ENCODE measurements at regions of chr6 and their contacts with region 1.

Region 1: DNA sequence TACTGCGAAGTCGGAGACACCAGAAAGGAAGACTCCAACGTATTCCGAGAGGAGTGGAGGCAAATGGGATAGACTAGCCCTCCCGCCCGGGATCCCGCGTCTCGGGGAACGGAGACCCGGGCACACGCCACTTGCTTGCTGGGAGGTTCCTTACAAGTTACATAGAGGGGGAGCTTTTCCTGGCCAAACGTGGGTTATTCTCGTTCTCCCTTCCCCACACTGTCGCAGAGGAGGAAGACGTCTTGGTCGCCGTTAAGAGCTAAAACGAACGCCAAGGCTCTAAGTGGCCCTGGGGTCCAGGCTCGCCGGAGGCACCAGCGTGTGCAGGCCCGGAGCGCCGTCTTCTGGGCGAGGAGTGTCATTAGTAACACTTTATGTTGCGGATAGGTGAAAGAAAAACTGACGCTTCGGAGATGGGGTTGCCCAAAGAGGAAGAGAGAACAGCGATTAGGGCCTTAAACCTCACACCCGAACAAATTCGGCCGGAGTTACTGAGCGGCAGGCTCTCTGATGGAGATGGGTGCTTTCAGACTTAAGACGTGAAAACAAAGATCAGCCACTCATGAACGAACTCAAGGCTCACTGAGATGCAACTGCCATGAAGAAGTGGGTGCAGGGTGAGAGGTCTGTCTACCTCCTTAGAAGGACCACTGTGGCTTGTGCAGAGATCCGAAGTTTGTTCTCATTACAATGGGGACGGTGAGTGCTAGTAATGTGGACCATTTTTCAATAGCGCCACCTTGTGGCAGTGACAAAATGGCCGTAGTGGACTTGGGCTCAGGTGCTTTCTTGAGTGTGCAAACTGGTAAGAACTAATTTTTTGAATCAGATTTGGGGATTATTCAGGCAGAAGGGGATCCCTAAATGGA is 11.7 kb upstream of the ZNF311 start:
- DNase-seq: peak; percentile 92
- H3K4me3 Mint-ChIP-seq: peak overlapping the region; percentile 90
- H3K27ac Mint-ChIP-seq: peak overlapping the region; percentile 84
- H3K4me1 Mint-ChIP-seq: peaks cover 12% of the 10 kb centered on the region
- H3K27me3 Mint-ChIP-seq: peaks cover 9% of the 10 kb centered on the region

Region 2: GRCh38 chr6:27078734-27079357 is 1937.9 kb before region 1 on chr6:
- CTCF ChIA-PET with region 1: no interaction called
- intact Hi-C with region 1: no loop called
- DNase-seq: peak; percentile 64
- H3K4me3 Mint-ChIP-seq: peak overlapping the region; percentile 67
- H3K27ac Mint-ChIP-seq: no peak overlapping the region
- H3K4me1 Mint-ChIP-seq: peaks cover 2% of the 10 kb centered on the region
- H3K27me3 Mint-ChIP-seq: peaks cover 26% of the 10 kb centered on the region

Region 3: GRCh38 chr6:28683944-28684538 is 332.8 kb before region 1 on chr6:
- CTCF ChIA-PET with region 1: interaction called, 4 read pairs
- intact Hi-C with region 1: loop called (anchors 1 kb)
- DNase-seq: no peak
- H3K4me3 Mint-ChIP-seq: no peak overlapping the region
- H3K27ac Mint-ChIP-seq: no peak overlapping the region
- H3K4me1 Mint-ChIP-seq: peaks cover 5% of the 10 kb centered on the region
- H3K27me3 Mint-ChIP-seq: peaks cover 73% of the 10 kb centered on the region

Region 4: DNA sequence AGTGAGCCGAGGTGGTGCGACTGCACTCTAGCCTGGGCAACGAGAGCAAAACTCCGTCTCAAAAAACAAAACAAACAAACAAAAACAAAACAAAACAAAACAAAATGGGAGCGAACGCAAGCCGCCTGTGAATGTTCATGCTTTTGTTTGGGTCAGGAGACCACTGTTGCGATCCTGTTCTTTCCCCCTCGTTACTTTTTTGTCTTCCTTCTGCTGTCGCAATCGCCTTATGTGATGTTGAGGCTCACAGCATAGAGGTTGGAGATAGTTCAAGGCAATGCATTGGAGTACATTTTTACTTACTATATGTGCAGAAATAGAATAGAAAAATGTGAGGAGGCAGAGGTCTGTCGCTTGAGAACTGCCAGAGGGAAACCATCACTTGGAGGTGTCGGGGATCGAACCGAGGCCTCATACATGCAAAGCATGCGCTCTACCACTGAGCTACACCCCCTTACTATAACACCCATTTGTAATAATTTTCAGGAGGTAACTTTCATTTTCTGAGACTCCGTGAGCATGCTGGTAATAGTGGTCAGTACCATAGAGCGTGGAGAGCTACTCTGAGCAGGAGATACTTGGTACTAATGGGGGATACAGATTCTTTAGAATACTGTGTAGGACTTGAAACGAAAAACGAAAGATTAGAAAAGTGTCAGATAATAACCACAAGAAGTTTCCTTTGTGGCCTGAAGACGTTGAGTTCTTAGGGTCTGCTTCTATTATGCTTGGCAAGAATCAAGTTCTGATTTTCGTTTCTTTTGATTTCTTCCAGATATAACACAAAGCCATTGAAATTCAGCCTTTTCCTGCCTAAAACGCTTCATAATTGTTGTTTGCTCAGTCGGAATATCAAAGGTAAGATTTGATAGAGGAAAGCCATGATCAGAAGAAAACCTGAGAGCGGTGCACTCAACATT is 214.1 kb before region 1 on chr6:
- CTCF ChIA-PET with region 1: no interaction called
- intact Hi-C with region 1: no loop called
- DNase-seq: no peak
- H3K4me3 Mint-ChIP-seq: no peak overlapping the region
- H3K27ac Mint-ChIP-seq: no peak overlapping the region
- H3K4me1 Mint-ChIP-seq: peaks cover 1% of the 10 kb centered on the region
- H3K27me3 Mint-ChIP-seq: peaks cover 66% of the 10 kb centered on the region

Region 5: GRCh38 chr6:28960846-28961500 is 55.8 kb before region 1 on chr6:
- CTCF ChIA-PET with region 1: no interaction called
- intact Hi-C with region 1: no loop called
- DNase-seq: no peak
- H3K4me3 Mint-ChIP-seq: no peak overlapping the region
- H3K27ac Mint-ChIP-seq: no peak overlapping the region
- H3K4me1 Mint-ChIP-seq: no peaks in the 10 kb centered on the region
- H3K27me3 Mint-ChIP-seq: peaks cover 21% of the 10 kb centered on the region

Region 6: GRCh38 chr6:28981833-28982475 is 34.8 kb before region 1 on chr6:
- CTCF ChIA-PET with region 1: interaction called, 6 read pairs
- intact Hi-C with region 1: loop called (anchors 1 kb)
- DNase-seq: peak; percentile 78
- H3K4me3 Mint-ChIP-seq: peak overlapping the region; percentile 88
- H3K27ac Mint-ChIP-seq: peak overlapping the region; percentile 84
- H3K4me1 Mint-ChIP-seq: peaks cover 50% of the 10 kb centered on the region
- H3K27me3 Mint-ChIP-seq: peaks cover 29% of the 10 kb centered on the region

Region 7: GRCh38 chr6:29005183-29005885 is 11.5 kb before region 1 on chr6 and contains the start of gene ZNF311:
- CTCF ChIA-PET with region 1: interaction called, 10 read pairs
- intact Hi-C with region 1: no loop called
- DNase-seq: peak; percentile 72
- H3K4me3 Mint-ChIP-seq: peak within 1 kb of the TSS; percentile 85
- H3K27ac Mint-ChIP-seq: peak within 1 kb of the TSS; percentile 82
- H3K4me1 Mint-ChIP-seq: peaks cover 15% of the 10 kb centered on the region
- H3K27me3 Mint-ChIP-seq: no peaks in the 10 kb centered on the region
- total RNA-seq, gene ZNF311: 0.57 to 0.69 TPM

Measured in activated naive CD4-positive, alpha-beta T cell treated with anti-CD3 and anti-CD28 coated beads for 36 hours (primary cell).